AG04449 (cell line): ENCODE measurements at regions of chr1 and their contacts with region 1.

Region 1: DNA sequence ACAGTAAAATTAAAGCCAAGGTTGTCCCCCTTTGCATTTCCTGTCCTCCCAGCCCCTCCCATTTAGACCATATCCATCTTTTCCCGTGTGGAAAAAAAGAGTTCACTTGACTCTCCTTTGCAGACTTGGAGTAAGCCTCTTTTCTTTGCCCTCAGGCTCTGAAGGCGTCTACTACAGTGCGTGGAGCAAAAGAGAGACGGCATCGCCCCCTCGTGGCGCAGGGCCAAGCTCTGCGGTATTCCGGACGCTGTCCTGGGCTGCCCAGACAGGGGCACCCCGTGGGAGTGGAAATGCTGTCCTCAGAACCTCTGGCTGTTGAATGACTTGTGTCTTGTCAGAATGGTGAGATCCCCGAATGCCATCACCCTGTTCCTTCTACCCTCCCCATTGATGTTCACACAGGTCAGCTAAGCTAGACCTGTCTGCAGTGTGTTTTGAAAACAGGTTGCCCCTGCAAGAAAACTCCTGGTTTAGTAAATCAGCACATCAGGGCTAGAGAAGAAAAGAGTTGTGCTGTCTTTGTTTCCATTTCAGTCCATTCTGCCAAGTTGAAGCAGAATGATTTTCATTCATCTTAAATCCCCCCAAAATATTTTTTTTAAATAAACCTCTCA is 12.3 kb upstream of the GJA8 start:
- DNase-seq: no peak
- H3K4me3 ChIP-seq: no peak overlapping the region
- CTCF ChIP-seq: peak; percentile 46

Region 2: GRCh38 chr1:147651213-147651865 is 238.9 kb before region 1 on chr1:
- CTCF ChIA-PET with region 1: no interaction called
- POLR2A ChIA-PET with region 1: no interaction called
- DNase-seq: no peak
- H3K4me3 ChIP-seq: no peak overlapping the region
- CTCF ChIP-seq: no peak

Region 3: DNA sequence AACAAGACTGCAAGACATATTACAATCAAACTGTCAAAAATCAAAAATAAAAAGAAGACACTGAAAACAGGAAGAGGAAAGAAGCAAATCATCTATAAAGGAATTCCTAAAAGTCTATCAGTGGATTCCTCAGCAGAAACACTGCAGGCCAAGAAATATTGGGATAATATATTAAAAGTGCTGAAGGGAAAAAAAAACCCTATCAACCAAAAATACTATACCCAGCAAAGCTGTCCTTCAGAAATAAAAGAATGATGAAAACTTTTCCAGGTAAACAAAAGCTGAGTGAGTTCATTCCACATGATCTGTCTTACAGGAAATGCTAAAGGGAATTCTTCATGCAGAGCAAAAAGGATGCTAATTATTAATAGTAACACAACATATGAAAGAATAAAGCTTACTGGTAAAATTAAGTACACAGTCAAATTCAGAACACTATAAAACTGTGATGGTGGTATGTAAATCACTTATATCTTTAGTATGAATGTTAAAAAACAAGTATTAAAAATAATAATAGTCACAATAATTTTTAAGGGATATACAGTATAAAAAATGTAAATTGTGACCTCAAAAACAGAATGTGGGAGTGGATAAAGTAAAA is 207.0 kb before region 1 on chr1:
- CTCF ChIA-PET with region 1: no interaction called
- POLR2A ChIA-PET with region 1: no interaction called
- DNase-seq: no peak
- H3K4me3 ChIP-seq: no peak overlapping the region
- CTCF ChIP-seq: no peak

Region 4: DNA sequence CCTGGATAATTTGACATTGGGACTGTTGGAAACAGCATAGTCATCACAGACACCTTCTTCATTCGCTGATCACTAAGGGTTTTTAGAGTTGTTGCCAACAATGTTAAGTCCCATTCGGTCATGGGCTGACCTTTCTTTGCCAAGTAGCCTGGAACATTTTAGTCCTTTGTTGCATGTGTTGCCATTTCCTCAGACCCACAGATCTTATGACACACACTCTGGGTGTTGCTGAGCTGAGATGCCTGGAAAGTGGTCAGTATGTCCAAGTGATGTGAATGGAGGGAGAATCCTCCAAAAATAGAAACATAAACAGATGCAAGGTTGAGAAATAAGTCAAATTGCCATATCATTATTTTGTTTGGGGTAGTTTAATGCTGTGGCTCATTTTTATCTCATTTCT is 68.4 kb before region 1 on chr1:
- CTCF ChIA-PET with region 1: no interaction called
- POLR2A ChIA-PET with region 1: no interaction called
- DNase-seq: no peak
- H3K4me3 ChIP-seq: no peak overlapping the region
- CTCF ChIP-seq: no peak

Region 5: GRCh38 chr1:147833231-147833840 is 56.9 kb before region 1 on chr1:
- CTCF ChIA-PET with region 1: no interaction called
- POLR2A ChIA-PET with region 1: no interaction called
- DNase-seq: no peak
- H3K4me3 ChIP-seq: no peak overlapping the region
- CTCF ChIP-seq: no peak

Region 6: GRCh38 chr1:147902183-147902845 is 12.0 kb after region 1 on chr1 and contains the start of gene GJA8:
- CTCF ChIA-PET with region 1: interaction called, 18 read pairs
- POLR2A ChIA-PET with region 1: no interaction called
- DNase-seq: no peak
- H3K4me3 ChIP-seq: no peak within 1 kb of the TSS
- CTCF ChIP-seq: no peak